ENCODE measurements at regions of chr19 and their contacts with region 1.

Region 1: GRCh38 chr19:37906869-37907734 is at the start of gene SIPA1L3:
- DNase-seq: peak; percentile 97
- ATAC-seq: peak; percentile 97
- H3K4me3 Mint-ChIP-seq: peak within 1 kb of the TSS; percentile 70
- H3K27ac Mint-ChIP-seq: peak within 1 kb of the TSS; percentile 85
- H3K4me1 Mint-ChIP-seq: peaks cover 20% of the 10 kb centered on the region
- H3K27me3 Mint-ChIP-seq: no peaks in the 10 kb centered on the region
- CTCF ChIP-seq: no peak
- total RNA-seq, gene SIPA1L3: 8.9 to 9.8 TPM

Region 2: GRCh38 chr19:37959665-37960114 is 52.6 kb after region 1 on chr19:
- CTCF ChIA-PET with region 1: no interaction called
- POLR2A ChIA-PET with region 1: no interaction called
- intact Hi-C with region 1: no loop called
- DNase-seq: no peak
- ATAC-seq: no peak
- H3K4me3 Mint-ChIP-seq: no peak overlapping the region
- H3K27ac Mint-ChIP-seq: no peak overlapping the region
- H3K4me1 Mint-ChIP-seq: peaks cover 4% of the 10 kb centered on the region
- H3K27me3 Mint-ChIP-seq: no peaks in the 10 kb centered on the region
- CTCF ChIP-seq: no peak

Region 3: DNA sequence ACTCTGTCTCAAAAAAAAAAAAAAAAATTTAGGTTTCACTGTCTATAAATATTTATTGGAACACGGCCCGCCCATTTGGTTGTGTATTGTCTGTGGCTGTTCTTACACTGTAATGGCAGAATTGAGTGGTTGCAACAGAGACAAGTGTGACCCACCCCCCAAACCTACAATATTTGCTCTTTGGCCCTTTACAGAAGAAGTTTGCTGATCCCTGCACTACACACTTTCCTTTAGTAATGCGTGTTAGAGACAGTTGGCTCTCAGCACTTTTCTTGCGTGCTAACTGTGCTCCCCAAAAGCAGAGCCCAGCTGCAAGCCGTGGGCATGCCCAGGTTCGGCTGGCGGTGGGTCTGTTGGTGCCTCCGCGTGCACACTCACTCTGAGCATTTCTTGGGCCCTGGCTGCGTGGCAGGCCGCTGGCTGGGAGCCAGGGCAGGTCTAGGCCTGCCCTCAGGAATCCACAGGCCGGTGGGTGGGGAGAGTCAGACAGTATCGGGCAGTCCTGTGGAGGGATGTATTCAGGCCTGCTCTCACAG is 72.5 kb after region 1 on chr19:
- CTCF ChIA-PET with region 1: no interaction called
- POLR2A ChIA-PET with region 1: no interaction called
- intact Hi-C with region 1: no loop called
- DNase-seq: no peak
- ATAC-seq: no peak
- H3K4me3 Mint-ChIP-seq: no peak overlapping the region
- H3K27ac Mint-ChIP-seq: no peak overlapping the region
- H3K4me1 Mint-ChIP-seq: no peaks in the 10 kb centered on the region
- H3K27me3 Mint-ChIP-seq: no peaks in the 10 kb centered on the region
- CTCF ChIP-seq: no peak

Region 4: GRCh38 chr19:38049105-38049649 is 142.1 kb after region 1 on chr19:
- CTCF ChIA-PET with region 1: interaction called, 13 read pairs
- POLR2A ChIA-PET with region 1: interaction called, 5 read pairs
- intact Hi-C with region 1: loop called (anchors 10 kb)
- DNase-seq: peak; percentile 74
- ATAC-seq: peak; percentile 87
- H3K4me3 Mint-ChIP-seq: peak overlapping the region; percentile 72
- H3K27ac Mint-ChIP-seq: peak overlapping the region; percentile 97
- H3K4me1 Mint-ChIP-seq: peaks cover 49% of the 10 kb centered on the region
- H3K27me3 Mint-ChIP-seq: no peaks in the 10 kb centered on the region
- CTCF ChIP-seq: no peak

Region 5: DNA sequence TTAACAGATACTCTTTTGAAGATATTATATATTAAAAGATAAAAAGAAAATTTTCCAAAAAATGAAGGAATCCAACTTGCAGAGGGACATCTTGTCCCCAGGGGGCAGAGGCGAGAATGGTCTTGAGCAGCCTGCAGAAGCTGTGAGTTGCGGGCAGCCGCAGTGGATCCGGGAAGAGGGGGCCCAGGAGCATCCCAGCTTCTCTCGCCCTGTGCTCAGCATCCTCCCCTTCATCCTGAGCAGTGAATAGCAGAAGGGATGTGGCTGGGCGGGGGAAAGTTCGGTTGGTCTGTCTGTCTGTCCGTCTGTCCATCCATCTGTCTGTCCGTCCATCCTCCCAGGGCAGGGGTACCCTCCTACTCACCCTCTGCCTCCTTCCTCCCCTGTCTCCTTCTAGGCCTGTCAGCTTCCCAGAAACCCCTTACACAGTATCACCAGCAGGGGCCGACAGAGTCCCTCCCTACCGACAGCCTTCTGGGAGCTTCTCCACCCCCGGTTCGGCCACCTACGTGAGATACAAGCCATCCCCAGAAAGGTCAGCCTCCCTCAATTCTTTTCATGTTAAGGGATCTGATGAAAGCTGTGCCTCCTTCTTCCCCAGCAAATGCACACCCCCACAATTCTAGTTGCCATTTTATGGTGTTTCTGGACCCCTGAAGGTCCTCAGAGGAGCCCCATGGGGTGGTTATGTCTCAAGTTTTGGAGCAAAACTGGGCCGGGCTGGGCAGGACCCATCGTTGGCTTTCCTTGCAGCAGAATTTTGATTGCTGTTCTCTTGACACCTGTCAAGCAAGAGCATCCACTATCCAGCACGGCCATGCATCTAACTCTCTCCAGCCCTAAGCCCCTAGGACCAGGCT is 235.3 kb after region 1 on chr19:
- CTCF ChIA-PET with region 1: interaction called, 15 read pairs
- POLR2A ChIA-PET with region 1: no interaction called
- intact Hi-C with region 1: no loop called
- DNase-seq: peak; percentile 82
- ATAC-seq: peak; percentile 95
- H3K4me3 Mint-ChIP-seq: no peak overlapping the region
- H3K27ac Mint-ChIP-seq: peak overlapping the region; percentile 25
- H3K4me1 Mint-ChIP-seq: peaks cover 8% of the 10 kb centered on the region
- H3K27me3 Mint-ChIP-seq: no peaks in the 10 kb centered on the region
- CTCF ChIP-seq: peak; percentile 76

Region 6: GRCh38 chr19:38245826-38246498 is 338.9 kb after region 1 on chr19:
- CTCF ChIA-PET with region 1: interaction called, 13 read pairs
- POLR2A ChIA-PET with region 1: no interaction called
- intact Hi-C with region 1: no loop called
- DNase-seq: no peak
- ATAC-seq: no peak
- H3K4me3 Mint-ChIP-seq: no peak overlapping the region
- H3K27ac Mint-ChIP-seq: no peak overlapping the region
- H3K4me1 Mint-ChIP-seq: peaks cover 5% of the 10 kb centered on the region
- H3K27me3 Mint-ChIP-seq: no peaks in the 10 kb centered on the region
- CTCF ChIP-seq: no peak

Measured in activated CD8-positive, alpha-beta T cell treated with anti-CD3 and anti-CD28 coated beads for 36 hours (primary cell).